Caco-2 (cell line): ENCODE measurements at regions of chr14 and their contacts with region 1.

Region 1: DNA sequence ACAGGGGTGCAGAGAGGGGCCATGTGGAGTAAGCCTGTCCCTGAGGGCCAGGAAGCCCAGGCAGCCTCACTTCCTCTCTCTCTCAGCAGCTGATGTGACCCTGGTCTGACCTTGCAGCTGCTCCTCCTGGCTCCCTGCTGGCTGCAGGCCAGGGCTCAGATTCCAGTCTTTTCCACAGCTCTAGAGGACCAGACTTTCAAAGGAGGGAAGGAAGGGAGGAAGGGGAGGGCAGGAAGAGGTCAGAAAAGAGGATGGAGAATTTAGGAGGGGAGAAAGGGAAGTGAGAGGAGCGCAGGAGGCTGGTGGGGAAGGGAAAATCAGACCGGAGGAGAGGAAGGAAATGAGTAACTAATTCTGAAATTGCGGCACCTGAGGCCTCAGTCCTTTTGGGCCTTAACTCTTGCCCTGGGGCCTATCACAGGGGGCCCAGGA is 40.9 kb upstream of the VASH1 start:
- DNase-seq: no peak
- H3K4me3 ChIP-seq: no peak overlapping the region
- H3K4me3 Mint-ChIP-seq: no peak overlapping the region
- H3K27ac Mint-ChIP-seq: no peak overlapping the region
- H3K4me1 ChIP-seq: no peaks in the 10 kb centered on the region
- H3K4me1 Mint-ChIP-seq: no peaks in the 10 kb centered on the region
- H3K27me3 ChIP-seq: no peaks in the 10 kb centered on the region
- H3K27me3 Mint-ChIP-seq: peaks cover 8% of the 10 kb centered on the region
- CTCF ChIP-seq: no peak

Region 2: GRCh38 chr14:74793506-74794168 is 1926.8 kb before region 1 on chr14:
- CTCF ChIA-PET with region 1: interaction called, 12 read pairs
- POLR2A ChIA-PET with region 1: no interaction called
- intact Hi-C with region 1: no loop called
- DNase-seq: peak in 1 of 2 experiments; percentile 6
- H3K4me3 ChIP-seq: no peak overlapping the region
- H3K4me3 Mint-ChIP-seq: no peak overlapping the region
- H3K27ac Mint-ChIP-seq: peak overlapping the region; percentile 38
- H3K4me1 ChIP-seq: no peaks in the 10 kb centered on the region
- H3K4me1 Mint-ChIP-seq: peaks cover 14% of the 10 kb centered on the region
- H3K27me3 ChIP-seq: no peaks in the 10 kb centered on the region
- H3K27me3 Mint-ChIP-seq: no peaks in the 10 kb centered on the region
- CTCF ChIP-seq: peak in 1 of 2 experiments; percentile 30